Activated T-helper 2 cell treated with anti-CD3 and anti-CD28 coated beads, Interferon-gamma antibody, Interleukin-2, Interleukin-4, amounts not matched to agents 10 μg/mL and 5 μg/mL and 100 μg/mL, durations not matched to agents 14 hours and 24 hours and 36 hours (primary cell): ENCODE measurements at regions of chr12 and their contacts with region 1.

Region 1: DNA sequence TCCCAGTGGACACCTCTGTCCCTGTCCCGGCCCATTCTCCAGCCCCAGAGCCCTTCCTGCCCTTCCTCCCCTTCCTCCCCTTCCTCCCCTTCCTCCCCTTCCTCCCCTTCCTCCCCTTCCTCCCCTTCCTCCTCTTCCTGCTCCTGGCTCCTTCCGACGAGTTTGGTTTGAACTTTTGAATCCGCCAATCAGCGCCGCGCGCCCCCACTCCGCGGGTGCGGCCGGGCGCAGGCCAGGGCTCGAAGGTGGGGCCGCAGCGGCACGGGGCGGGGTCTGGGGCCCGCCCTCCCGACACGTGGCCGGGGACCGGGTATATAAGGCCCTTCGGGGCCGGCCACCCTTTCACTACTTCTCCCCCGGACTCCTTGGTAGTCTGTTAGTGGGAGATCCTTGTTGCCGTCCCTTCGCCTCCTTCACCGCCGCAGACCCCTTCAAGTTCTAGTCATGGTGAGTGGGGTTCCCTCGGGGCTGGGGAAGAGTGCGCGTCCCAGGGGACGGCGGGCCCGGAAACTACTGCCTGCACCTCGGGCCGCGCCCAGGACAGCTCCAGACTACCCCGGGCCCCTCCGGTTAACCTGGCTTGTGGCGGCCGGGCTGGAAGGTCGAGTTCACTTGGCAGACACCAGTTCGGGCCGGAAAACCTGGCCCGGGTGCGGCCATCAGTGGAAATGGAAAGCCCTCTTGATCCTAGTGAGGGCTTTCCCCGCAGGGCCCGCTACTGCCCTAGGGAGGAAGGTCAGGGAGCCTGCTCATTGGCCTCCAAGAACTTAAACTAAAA is at the start of gene TUBA1C:
- DNase-seq: peak; percentile 92
- H3K4me3 Mint-ChIP-seq: peak within 1 kb of the TSS; percentile 100
- H3K27ac Mint-ChIP-seq: peak within 1 kb of the TSS; percentile 98
- H3K4me1 Mint-ChIP-seq: peaks cover 41% of the 10 kb centered on the region
- H3K27me3 Mint-ChIP-seq: no peaks in the 10 kb centered on the region
- total RNA-seq, gene TUBA1C: 349 and 355 TPM in 2 replicates

Region 2: GRCh38 chr12:49174218-49174617 is 90.7 kb before region 1 on chr12:
- intact Hi-C with region 1: no loop called
- DNase-seq: no peak
- H3K4me3 Mint-ChIP-seq: no peak overlapping the region
- H3K27ac Mint-ChIP-seq: no peak overlapping the region
- H3K4me1 Mint-ChIP-seq: no peaks in the 10 kb centered on the region
- H3K27me3 Mint-ChIP-seq: no peaks in the 10 kb centered on the region

Region 3: GRCh38 chr12:49322708-49323523 is 58.0 kb after region 1 on chr12 and contains the start of gene TROAP:
- intact Hi-C with region 1: loop called (anchors 2 kb)
- DNase-seq: peak; percentile 98
- H3K4me3 Mint-ChIP-seq: peak within 1 kb of the TSS; percentile 99
- H3K27ac Mint-ChIP-seq: peak within 1 kb of the TSS; percentile 82
- H3K4me1 Mint-ChIP-seq: peaks cover 13% of the 10 kb centered on the region
- H3K27me3 Mint-ChIP-seq: peaks cover 3% of the 10 kb centered on the region
- total RNA-seq, gene TROAP: 58.3 and 59.3 TPM in 2 replicates